AG04450 (cell line): ENCODE measurements at regions of chr13 and their contacts with region 1.

Region 1: GRCh38 chr13:96020155-96020575 is 33.0 kb downstream of the UGGT2 start:
- DNase-seq: peak; percentile 27
- H3K4me3 ChIP-seq: no peak overlapping the region
- H3K27ac ChIP-seq: no peak overlapping the region
- H3K27me3 ChIP-seq: no peaks in the 10 kb centered on the region
- CTCF ChIP-seq: peak; percentile 65

Region 2: DNA sequence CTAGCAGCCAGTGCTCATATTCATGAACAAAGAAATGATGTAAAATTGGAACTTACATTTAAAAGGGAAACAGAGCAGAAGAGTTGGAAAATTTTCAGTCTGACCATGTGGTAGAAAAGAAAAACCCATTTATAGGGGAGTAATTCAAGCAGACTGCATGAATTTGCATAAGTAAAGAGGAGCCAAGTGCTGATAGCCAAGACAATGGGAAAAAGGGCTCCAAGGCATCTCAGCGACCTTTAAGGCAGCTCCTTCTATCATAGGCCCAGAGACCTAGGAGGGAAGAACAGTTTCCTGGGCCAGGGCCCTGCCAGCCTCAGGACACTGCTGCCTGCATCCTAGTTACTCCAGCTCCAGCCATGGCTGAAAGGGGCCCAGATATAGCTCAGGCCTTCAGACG is 335.7 kb before region 1 on chr13:
- CTCF ChIA-PET with region 1: no interaction called
- POLR2A ChIA-PET with region 1: no interaction called
- DNase-seq: no peak
- H3K4me3 ChIP-seq: no peak overlapping the region
- H3K27ac ChIP-seq: no peak overlapping the region
- H3K27me3 ChIP-seq: no peaks in the 10 kb centered on the region
- CTCF ChIP-seq: no peak

Region 3: DNA sequence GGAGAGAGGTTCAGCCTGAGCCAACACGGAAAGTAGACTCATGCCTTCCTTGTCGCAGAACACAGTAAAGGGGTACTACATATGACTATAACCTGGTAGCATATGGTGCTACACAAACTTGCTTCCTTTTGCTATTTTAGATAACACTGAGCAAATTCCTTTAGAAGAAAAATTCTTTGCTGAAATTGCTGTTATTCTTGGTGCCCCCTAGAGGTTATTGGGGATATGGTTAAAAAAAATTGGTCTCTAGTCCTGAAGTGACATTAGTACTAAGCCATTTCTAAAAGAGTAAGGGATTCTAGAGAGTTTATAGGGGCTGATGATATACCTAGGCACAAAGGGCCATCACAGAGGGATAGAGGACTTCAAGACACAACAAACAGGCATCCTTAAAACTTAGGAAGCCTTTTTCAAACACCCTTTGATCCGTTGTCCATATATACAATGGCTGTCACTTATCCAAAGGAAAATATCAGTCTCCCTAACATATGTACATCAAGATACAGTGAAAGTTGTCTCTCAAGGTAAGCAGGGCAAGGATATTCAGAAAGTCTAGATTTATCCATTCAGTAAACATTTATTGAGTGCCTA is 55.9 kb after region 1 on chr13:
- CTCF ChIA-PET with region 1: interaction called, 11 read pairs
- POLR2A ChIA-PET with region 1: no interaction called
- DNase-seq: no peak
- H3K4me3 ChIP-seq: no peak overlapping the region
- H3K27ac ChIP-seq: no peak overlapping the region
- H3K27me3 ChIP-seq: no peaks in the 10 kb centered on the region
- CTCF ChIP-seq: peak; percentile 71

Region 4: DNA sequence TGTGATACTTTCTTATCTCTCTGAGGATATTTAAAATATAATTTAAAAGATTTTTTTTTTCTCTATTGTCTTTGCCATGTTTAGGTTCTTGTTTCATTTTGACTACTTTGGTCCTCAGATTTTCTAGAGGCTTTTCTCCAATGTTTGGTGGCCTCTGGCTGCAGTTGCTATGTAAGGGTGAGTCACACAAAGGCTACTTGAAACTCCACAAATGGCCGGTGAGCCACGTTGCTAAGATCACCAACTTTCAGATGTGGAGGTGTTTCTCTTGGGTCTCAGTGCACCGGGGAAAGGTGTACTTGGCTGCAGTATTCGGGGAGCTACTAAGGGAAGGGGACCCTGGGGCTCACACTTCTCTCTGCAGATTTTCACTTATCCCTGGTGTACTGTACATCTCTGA is 317.9 kb after region 1 on chr13:
- CTCF ChIA-PET with region 1: no interaction called
- POLR2A ChIA-PET with region 1: no interaction called
- DNase-seq: no peak
- H3K4me3 ChIP-seq: no peak overlapping the region
- H3K27ac ChIP-seq: no peak overlapping the region
- H3K27me3 ChIP-seq: no peaks in the 10 kb centered on the region
- CTCF ChIP-seq: no peak

Region 5: GRCh38 chr13:96817336-96817941 is 797.3 kb after region 1 on chr13:
- CTCF ChIA-PET with region 1: interaction called, 31 read pairs
- POLR2A ChIA-PET with region 1: no interaction called
- DNase-seq: no peak
- H3K4me3 ChIP-seq: no peak overlapping the region
- H3K27ac ChIP-seq: no peak overlapping the region
- H3K27me3 ChIP-seq: no peaks in the 10 kb centered on the region
- CTCF ChIP-seq: peak; percentile 39

Region 6: DNA sequence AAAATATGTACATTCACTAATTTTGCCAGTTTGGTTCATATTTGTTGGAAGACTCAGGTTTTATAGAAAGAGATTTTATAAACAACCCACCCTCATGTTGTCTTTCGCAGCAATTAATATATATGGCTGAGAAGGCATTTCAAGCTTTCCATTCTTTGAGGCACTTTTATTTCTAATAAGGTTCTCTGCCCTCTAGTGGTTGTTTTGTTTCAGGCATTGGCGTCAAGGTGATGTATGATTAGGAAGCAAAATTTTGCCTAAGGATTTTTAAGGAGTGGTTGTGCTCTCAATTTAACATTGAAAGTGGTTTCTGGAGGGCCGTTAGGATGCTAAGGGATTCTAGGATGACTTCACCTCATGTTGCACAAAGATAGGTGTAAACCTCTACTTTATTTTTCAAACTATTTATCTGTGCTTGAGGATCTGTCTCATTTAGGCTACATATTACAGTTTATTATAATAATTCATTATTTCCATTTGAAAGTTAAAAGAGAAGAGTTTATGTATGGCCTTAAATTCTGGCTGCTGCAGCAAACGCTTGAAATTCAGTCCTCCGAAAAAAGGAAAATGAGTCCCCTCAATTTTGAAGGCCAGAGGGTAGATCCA is 938.2 kb after region 1 on chr13:
- CTCF ChIA-PET with region 1: interaction called, 28 read pairs
- POLR2A ChIA-PET with region 1: no interaction called
- DNase-seq: no peak
- H3K4me3 ChIP-seq: no peak overlapping the region
- H3K27ac ChIP-seq: no peak overlapping the region
- H3K27me3 ChIP-seq: no peaks in the 10 kb centered on the region
- CTCF ChIP-seq: peak; percentile 86